Activated T-helper 2 cell treated with anti-CD3 and anti-CD28 coated beads, Interferon-gamma antibody, Interleukin-2, Interleukin-4, amounts not matched to agents 10 μg/mL and 5 μg/mL and 100 μg/mL, durations not matched to agents 14 hours and 24 hours and 36 hours (primary cell): ENCODE measurements at regions of chr17 and their contacts with region 1.

Region 1: GRCh38 chr17:35540589-35541404 is 3.3 kb upstream of the SLFN12L start:
- DNase-seq: peak; percentile 34
- H3K4me3 Mint-ChIP-seq: peak overlapping the region; percentile 86
- H3K27ac Mint-ChIP-seq: peak overlapping the region; percentile 99
- H3K4me1 Mint-ChIP-seq: peaks cover 57% of the 10 kb centered on the region
- H3K27me3 Mint-ChIP-seq: no peaks in the 10 kb centered on the region

Region 2: DNA sequence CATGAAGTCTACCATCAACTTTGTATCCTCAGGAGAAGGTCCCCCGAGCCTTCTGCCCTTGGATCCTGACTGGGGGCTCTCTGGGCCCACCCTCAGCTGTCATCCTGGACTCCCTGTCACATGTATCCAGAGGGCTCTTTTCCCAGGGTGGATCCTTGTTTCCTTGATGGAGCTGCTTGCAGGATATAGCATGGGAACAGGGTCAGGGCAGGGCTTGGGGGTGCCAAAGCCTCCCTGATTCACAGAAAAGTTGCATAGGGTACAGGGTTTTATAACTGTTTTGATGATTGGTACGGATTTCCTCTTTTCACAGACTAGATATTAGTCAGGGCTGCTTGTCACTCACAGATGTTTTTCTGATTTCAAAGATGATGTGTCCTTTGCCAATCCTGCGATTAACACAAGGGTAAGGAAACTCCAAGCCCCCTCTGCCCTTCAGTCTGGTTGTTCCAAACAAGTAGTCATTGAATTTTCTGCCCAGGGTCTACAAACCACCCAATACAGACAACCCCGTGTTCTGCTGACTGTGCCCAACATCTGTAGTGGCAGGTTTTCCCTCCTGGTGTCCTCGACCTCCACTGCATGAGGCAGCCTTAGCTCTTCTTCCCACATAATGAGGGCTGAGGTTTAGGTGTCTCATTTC is 326.0 kb before region 1 on chr17:
- intact Hi-C with region 1: loop called (anchors 2 kb)
- DNase-seq: peak; percentile 41
- H3K4me3 Mint-ChIP-seq: peak overlapping the region; percentile 67
- H3K27ac Mint-ChIP-seq: peak overlapping the region; percentile 95
- H3K4me1 Mint-ChIP-seq: peaks cover 79% of the 10 kb centered on the region
- H3K27me3 Mint-ChIP-seq: no peaks in the 10 kb centered on the region

Region 3: DNA sequence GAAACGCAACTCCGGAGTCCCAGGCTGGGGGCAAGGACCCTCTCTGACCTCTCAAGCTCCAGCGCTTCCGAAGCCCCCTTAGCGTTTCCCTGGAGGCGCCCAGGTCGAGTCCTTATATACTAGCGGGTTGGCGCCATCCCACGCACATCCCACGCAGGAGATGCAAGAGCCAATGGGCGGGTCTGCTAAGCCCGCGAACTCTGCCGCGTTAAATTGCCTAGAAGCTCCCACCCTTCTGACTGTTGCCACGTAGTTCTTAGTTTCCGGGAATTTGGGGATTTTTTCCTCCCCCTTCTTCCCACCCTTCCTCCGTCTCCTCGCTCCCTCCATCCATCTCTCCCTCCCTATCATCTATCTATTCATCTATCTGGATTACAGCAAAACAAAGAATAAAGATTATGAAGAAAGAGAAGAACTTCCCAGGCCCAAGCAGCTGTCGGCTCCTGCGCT is 167.2 kb before region 1 on chr17 and contains the start of gene SLFN11:
- intact Hi-C with region 1: loop called (anchors 2 kb)
- DNase-seq: peak; percentile 81
- H3K4me3 Mint-ChIP-seq: peak within 1 kb of the TSS; percentile 96
- H3K27ac Mint-ChIP-seq: peak within 1 kb of the TSS; percentile 96
- H3K4me1 Mint-ChIP-seq: peaks cover 56% of the 10 kb centered on the region
- H3K27me3 Mint-ChIP-seq: peaks cover 3% of the 10 kb centered on the region
- total RNA-seq, gene SLFN11: 112 and 114 TPM in 2 replicates

Region 4: GRCh38 chr17:35486920-35487732 is 53.7 kb before region 1 on chr17:
- intact Hi-C with region 1: loop called (anchors 2 kb)
- DNase-seq: peak; percentile 65
- H3K4me3 Mint-ChIP-seq: peak overlapping the region; percentile 83
- H3K27ac Mint-ChIP-seq: peak overlapping the region; percentile 94
- H3K4me1 Mint-ChIP-seq: peaks cover 49% of the 10 kb centered on the region
- H3K27me3 Mint-ChIP-seq: no peaks in the 10 kb centered on the region

Region 5: DNA sequence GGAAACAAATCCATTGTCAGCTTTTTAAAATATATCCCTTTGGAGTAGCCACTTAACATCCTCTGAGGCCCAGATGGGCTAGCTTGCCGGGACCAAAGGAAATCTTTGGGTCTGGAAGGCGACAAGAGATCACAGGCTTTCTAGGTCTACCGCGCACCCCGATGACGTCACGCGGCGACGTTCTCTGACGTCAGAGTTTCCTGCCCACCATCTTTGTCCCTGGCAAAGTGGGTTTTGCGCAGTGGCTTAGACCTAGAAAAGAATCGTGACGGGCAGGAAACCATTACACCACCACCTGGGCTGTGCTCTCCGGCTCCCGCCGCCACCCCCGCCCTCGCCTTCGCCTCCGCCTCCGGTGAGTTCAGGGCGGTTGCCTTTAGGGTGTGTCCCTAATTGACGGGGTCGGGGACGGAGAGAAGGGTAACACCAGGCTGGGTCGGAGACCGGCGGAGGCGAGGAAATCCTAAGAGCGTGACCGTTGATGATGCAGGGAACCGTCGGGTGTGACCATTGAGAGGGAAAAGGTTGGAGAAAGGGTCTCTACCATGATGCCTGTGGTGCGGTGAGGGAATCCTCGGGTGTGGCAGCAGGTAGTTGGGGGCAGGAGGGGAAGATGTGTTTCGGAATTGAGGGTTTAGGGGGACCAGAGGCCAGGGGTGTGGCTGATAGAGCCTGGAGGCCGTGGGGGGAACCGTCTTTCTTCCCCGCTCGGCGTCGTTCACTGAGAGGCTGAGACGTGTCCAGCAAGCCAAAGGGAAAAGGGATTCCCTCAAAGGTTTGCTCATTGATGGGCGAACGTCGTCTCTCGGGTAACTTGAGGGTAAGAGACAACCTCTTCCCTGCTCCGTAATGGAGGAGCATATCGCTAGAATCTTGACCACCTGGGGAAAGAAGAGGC is 46.5 kb after region 1 on chr17 and contains the start of gene AP2B1:
- intact Hi-C with region 1: loop called (anchors 2 kb)
- DNase-seq: peak; percentile 96
- H3K4me3 Mint-ChIP-seq: peak within 1 kb of the TSS; percentile 94
- H3K27ac Mint-ChIP-seq: peak within 1 kb of the TSS; percentile 96
- H3K4me1 Mint-ChIP-seq: peaks cover 30% of the 10 kb centered on the region
- H3K27me3 Mint-ChIP-seq: peaks cover 7% of the 10 kb centered on the region
- total RNA-seq, gene AP2B1: 177 and 194 TPM in 2 replicates